Activated T-helper 2 cell treated with anti-CD3 and anti-CD28 coated beads, Interferon-gamma antibody, Interleukin-2, Interleukin-4, amounts not matched to agents 10 μg/mL and 5 μg/mL and 100 μg/mL, durations not matched to agents 14 hours and 24 hours and 36 hours (primary cell): ENCODE measurements at regions of chr16 and their contacts with region 1.

Region 1: GRCh38 chr16:75064403-75065148 is 52.0 kb downstream of the LDHD start:
- DNase-seq: no peak
- H3K4me3 Mint-ChIP-seq: peak overlapping the region; percentile 63
- H3K27ac Mint-ChIP-seq: peak overlapping the region; percentile 69
- H3K4me1 Mint-ChIP-seq: peaks cover 36% of the 10 kb centered on the region
- H3K27me3 Mint-ChIP-seq: no peaks in the 10 kb centered on the region

Region 2: GRCh38 chr16:75053791-75054555 is 10.6 kb before region 1 on chr16:
- intact Hi-C with region 1: no loop called
- DNase-seq: no peak
- H3K4me3 Mint-ChIP-seq: no peak overlapping the region
- H3K27ac Mint-ChIP-seq: no peak overlapping the region
- H3K4me1 Mint-ChIP-seq: peaks cover 10% of the 10 kb centered on the region
- H3K27me3 Mint-ChIP-seq: no peaks in the 10 kb centered on the region

Region 3: GRCh38 chr16:75074920-75075687 is 10.5 kb after region 1 on chr16:
- intact Hi-C with region 1: loop called (anchors 1 kb)
- DNase-seq: peak; percentile 84
- H3K4me3 Mint-ChIP-seq: peak overlapping the region; percentile 69
- H3K27ac Mint-ChIP-seq: peak overlapping the region; percentile 90
- H3K4me1 Mint-ChIP-seq: peaks cover 55% of the 10 kb centered on the region
- H3K27me3 Mint-ChIP-seq: no peaks in the 10 kb centered on the region

Region 4: GRCh38 chr16:75129491-75130149 is 65.0 kb after region 1 on chr16:
- intact Hi-C with region 1: no loop called
- DNase-seq: no peak
- H3K4me3 Mint-ChIP-seq: no peak overlapping the region
- H3K27ac Mint-ChIP-seq: no peak overlapping the region
- H3K4me1 Mint-ChIP-seq: peaks cover 4% of the 10 kb centered on the region
- H3K27me3 Mint-ChIP-seq: peaks cover 4% of the 10 kb centered on the region